Endothelial cell of umbilical vein (primary cell): ENCODE measurements at regions of chr1 and their contacts with region 1.

Region 1: DNA sequence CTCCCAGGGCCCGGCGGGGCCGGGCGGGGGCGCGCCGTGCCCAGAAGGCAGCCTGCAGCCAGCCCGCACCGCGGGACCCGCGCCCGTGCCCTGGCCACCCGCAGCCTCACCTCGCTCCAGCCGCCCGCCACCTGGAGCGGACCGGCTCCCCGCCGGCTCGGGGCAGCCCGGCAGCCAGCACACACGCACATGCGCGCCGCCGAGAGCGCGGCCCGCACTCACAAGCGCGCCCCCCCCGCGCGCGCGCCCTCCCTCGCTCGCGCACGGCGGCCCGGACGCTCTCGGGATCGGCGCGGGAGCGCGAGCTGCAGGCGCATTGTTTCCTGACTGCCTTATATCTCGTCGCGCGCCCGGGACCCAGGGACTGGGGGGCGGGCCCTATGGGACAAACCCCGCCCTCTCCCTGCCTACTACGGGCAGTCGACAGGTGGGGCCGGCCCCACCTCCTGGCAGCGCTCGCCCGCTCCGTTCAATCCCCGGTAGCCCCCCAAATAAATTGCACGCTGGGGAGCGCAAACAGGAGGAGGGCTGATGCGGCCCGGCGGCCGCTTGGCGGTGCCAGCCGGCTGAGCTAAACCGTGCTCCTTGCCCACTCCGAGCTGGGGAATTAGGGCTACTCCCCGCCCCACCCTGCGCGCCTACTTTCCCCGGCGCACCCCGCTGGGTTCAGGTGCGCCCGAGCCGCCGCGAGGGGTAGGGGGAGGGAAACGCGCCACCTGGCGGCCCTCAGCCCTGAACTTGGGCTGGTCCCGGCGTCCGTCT is at the start of gene MYCL:
- DNase-seq: peak; percentile 67
- H3K4me3 ChIP-seq: peak within 1 kb of the TSS; percentile 36 to 62 (median 46)
- H3K27ac ChIP-seq: no peak within 1 kb of the TSS
- H3K4me1 ChIP-seq: peaks cover 14% of the 10 kb centered on the region
- H3K27me3 ChIP-seq: peaks cover 13 to 20% of the 10 kb centered on the region in 2 experiments
- CTCF ChIP-seq: peak; percentile 60 to 83
- POLR2A ChIP-seq: no peak
- total RNA-seq, gene MYCL: 1.4 and 2.1 TPM in 2 replicates

Region 2: GRCh38 chr1:39826583-39826982 is 75.3 kb before region 1 on chr1:
- CTCF ChIA-PET with region 1: interaction called, 15 read pairs
- POLR2A ChIA-PET with region 1: no interaction called
- dilution Hi-C with region 1: no loop called
- intact Hi-C with region 1: no loop called
- DNase-seq: peak; percentile 12
- H3K4me3 ChIP-seq: no peak overlapping the region
- H3K27ac ChIP-seq: no peak overlapping the region
- H3K4me1 ChIP-seq: no peaks in the 10 kb centered on the region
- H3K27me3 ChIP-seq: no peaks in the 10 kb centered on the region
- CTCF ChIP-seq: no peak
- POLR2A ChIP-seq: no peak

Region 3: GRCh38 chr1:39863177-39863576 is 38.7 kb before region 1 on chr1:
- CTCF ChIA-PET with region 1: interaction called, 14 read pairs
- POLR2A ChIA-PET with region 1: no interaction called
- dilution Hi-C with region 1: no loop called
- intact Hi-C with region 1: no loop called
- DNase-seq: no peak
- H3K4me3 ChIP-seq: no peak overlapping the region
- H3K27ac ChIP-seq: no peak overlapping the region
- H3K4me1 ChIP-seq: peaks cover 4% of the 10 kb centered on the region
- H3K27me3 ChIP-seq: no peaks in the 10 kb centered on the region
- CTCF ChIP-seq: no peak
- POLR2A ChIP-seq: no peak

Region 4: DNA sequence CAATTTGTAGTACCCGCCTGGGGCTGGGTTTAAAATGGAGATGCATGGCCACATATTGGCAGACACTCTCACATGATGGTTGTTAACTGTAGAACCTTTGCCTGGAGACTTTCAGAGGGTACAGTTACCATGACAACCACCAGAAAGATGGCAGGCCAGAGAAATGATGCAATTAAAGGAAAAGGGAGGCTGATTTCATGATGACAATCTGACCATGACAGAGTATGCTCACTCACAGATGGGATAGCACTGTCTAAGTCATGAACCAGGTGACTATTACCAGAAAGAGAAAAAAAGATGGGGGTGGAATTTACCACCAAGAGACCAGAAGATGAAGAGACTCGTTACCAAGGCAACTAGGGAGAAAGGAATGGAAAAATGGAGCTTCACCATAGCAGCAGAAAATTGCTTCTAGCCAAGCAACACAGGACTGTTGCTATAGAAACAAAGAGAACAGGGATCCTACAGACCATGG is 15.1 kb before region 1 on chr1:
- CTCF ChIA-PET with region 1: interaction called, 27 read pairs
- POLR2A ChIA-PET with region 1: no interaction called
- dilution Hi-C with region 1: no loop called
- intact Hi-C with region 1: no loop called
- DNase-seq: no peak
- H3K4me3 ChIP-seq: no peak overlapping the region
- H3K27ac ChIP-seq: no peak overlapping the region
- H3K4me1 ChIP-seq: peaks cover 10% of the 10 kb centered on the region
- H3K27me3 ChIP-seq: peaks cover 2 to 4% of the 10 kb centered on the region in 2 experiments
- CTCF ChIP-seq: no peak
- POLR2A ChIP-seq: no peak

Region 5: DNA sequence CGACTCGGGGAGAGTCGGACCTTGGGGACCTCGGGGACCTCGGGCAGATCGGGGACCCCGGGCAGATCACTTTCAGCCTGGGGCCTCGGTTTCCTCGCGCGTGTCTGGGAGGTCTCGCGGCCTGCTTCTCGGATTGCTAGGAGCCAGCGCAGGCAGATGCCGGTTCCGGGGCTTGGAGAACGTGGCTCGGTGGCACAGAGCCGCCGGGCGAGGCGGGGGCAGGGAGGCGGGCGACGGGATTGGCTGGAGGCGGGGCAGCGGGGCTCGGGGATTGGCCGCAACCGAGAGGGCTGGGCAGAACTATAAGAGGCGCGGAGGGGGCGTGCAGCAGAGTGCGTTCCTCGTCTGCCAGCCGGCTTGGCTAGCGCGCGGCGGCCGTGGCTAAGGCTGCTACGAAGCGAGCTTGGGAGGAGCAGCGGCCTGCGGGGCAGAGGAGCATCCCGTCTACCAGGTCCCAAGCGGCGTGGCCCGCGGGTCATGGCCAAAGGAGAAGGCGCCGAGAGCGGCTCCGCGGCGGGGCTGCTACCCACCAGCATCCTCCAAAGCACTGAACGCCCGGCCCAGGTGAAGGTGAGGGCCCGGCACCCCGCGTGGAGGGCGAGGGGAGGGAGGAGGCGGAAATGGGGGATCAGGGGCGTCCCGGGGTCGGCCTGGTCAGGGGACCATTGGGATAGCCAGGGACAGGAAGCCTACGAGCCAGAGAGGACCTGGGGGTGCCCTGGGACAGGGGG is 53.1 kb after region 1 on chr1 and contains the start of gene MFSD2A:
- CTCF ChIA-PET with region 1: interaction called, 19 read pairs
- POLR2A ChIA-PET with region 1: no interaction called
- dilution Hi-C with region 1: no loop called
- intact Hi-C with region 1: loop called (anchors 5 kb)
- DNase-seq: peak; percentile 91
- H3K4me3 ChIP-seq: peak within 1 kb of the TSS; percentile 47 to 87 (median 75)
- H3K27ac ChIP-seq: peak within 1 kb of the TSS; percentile 10
- H3K4me1 ChIP-seq: peaks cover 12% of the 10 kb centered on the region
- H3K27me3 ChIP-seq: no peaks in the 10 kb centered on the region
- CTCF ChIP-seq: no peak
- POLR2A ChIP-seq: no peak
- total RNA-seq, gene MFSD2A: 4.3 and 5.5 TPM in 2 replicates

Region 6: GRCh38 chr1:40032240-40032891 is 130.5 kb after region 1 on chr1:
- CTCF ChIA-PET with region 1: interaction called, 14 read pairs
- POLR2A ChIA-PET with region 1: no interaction called
- dilution Hi-C with region 1: no loop called
- intact Hi-C with region 1: loop called (anchors 5 kb)
- DNase-seq: peak; percentile 71
- H3K4me3 ChIP-seq: no peak overlapping the region
- H3K27ac ChIP-seq: no peak overlapping the region
- H3K4me1 ChIP-seq: peaks cover 10% of the 10 kb centered on the region
- H3K27me3 ChIP-seq: no peaks in the 10 kb centered on the region
- CTCF ChIP-seq: peak; percentile 56 to 59
- POLR2A ChIP-seq: no peak